PC-9 (cell line): ENCODE measurements at regions of chrX and their contacts with region 1.

Region 1: DNA sequence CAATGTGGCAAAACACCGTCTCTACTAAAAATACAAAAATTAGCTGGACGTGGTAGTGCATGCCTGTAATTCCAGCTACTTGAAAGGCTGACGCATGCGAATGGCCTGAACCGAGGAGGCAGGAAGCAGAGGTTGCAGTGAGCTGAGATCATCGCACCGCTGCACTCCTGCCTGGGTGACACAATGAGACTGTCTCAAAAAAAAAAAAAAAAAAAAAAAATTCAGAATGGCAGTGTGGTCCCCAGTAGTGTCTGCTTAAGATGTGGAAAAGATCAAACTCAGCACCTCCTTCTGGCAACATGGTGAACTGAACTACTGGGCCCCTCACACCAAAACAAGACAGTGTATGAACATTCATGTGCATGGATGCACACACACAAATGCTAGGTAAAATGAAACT is 32.2 kb downstream of the SMS start:
- DNase-seq: peak in 1 of 2 experiments; percentile 69
- H3K4me3 ChIP-seq: no peak overlapping the region
- H3K27ac ChIP-seq: peak overlapping the region; percentile 74
- H3K4me1 ChIP-seq: peaks cover 24% of the 10 kb centered on the region
- H3K27me3 ChIP-seq: no peaks in the 10 kb centered on the region
- CTCF ChIP-seq: no peak

Region 2: DNA sequence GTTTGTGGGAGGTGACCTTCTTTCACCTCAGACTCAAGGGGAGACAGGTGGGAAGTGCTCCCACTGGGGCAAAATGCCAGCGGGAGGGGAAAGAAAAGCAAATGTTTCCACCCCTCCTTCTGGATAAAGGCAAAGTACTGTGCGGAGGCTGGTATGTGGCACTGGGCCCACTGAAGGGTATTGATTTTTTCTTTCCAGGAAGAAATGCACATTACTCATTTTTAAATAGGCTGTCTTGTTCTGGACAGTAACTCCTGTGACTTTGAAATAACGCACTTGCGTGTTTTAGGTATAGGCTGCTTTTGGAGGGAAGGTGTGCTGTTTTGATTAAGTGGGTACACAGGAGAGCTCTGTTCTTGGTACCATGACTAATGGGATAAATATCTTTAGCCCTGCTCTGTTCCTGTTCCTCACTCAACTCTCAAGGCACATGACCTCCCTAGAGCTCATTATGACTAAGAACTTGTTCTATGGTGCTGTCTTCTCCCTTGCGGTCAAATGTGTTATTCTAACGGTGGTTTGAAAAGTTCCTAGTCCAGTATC is 174.0 kb before region 1 on chrX:
- CTCF ChIA-PET with region 1: no interaction called
- POLR2A ChIA-PET with region 1: no interaction called
- intact Hi-C with region 1: loop called (anchors 1 kb)
- DNase-seq: peak; percentile 28 to 63
- H3K4me3 ChIP-seq: no peak overlapping the region
- H3K27ac ChIP-seq: no peak overlapping the region
- H3K4me1 ChIP-seq: no peaks in the 10 kb centered on the region
- H3K27me3 ChIP-seq: no peaks in the 10 kb centered on the region
- CTCF ChIP-seq: no peak

Region 3: GRCh38 chrX:21839334-21840192 is 133.2 kb before region 1 on chrX and contains the start of gene MBTPS2:
- CTCF ChIA-PET with region 1: no interaction called
- POLR2A ChIA-PET with region 1: no interaction called
- intact Hi-C with region 1: loop called (anchors 2 kb)
- DNase-seq: peak; percentile 71 to 79
- H3K4me3 ChIP-seq: peak within 1 kb of the TSS; percentile 89
- H3K27ac ChIP-seq: peak within 1 kb of the TSS; percentile 67
- H3K4me1 ChIP-seq: no peaks in the 10 kb centered on the region; the same call in 1 of the 2 replicates
- H3K27me3 ChIP-seq: no peaks in the 10 kb centered on the region
- CTCF ChIP-seq: peak; percentile 34; the same call in 1 of the 2 replicates
- total RNA-seq, gene MBTPS2: 12.7 and 16.9 TPM in 2 replicates

Region 4: DNA sequence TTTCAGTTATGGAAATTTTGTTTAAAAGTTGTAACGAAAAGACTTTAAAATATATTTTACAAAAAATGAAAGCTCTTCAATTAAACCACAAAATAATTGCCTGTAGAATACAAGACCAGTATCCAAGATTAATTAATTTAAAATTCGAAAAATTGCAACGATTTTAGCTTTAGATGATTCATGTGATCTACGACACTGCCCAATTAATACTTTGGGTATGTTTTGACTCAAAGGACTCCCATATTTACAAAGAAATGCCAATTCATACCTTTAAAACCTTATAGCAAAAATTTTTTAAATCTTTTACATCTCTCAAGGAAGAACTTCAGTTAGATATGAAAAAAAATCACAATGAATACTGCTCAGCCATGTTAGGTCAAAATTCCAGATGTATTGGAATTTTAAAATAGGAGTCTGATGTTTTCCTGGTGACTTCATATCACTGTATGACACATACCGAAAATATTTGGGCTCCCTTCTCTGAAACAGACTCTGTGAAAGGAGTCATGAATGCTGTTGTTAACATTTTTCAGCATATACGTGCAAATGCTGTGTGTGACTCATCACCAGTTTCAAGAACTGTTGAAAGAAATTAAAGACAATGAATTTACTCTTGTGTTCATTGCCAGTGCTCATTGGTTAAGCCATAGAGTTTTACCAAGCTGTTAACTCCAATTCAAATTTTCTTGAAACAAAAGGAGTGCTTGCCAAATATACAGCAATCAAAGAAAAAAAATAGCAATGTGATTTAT is 46.0 kb before region 1 on chrX:
- CTCF ChIA-PET with region 1: interaction called, 3 read pairs
- POLR2A ChIA-PET with region 1: no interaction called
- intact Hi-C with region 1: loop called (anchors 2 kb)
- DNase-seq: peak; percentile 24 to 94
- H3K4me3 ChIP-seq: no peak overlapping the region
- H3K27ac ChIP-seq: peak overlapping the region; percentile 82
- H3K4me1 ChIP-seq: peaks cover 17% of the 10 kb centered on the region
- H3K27me3 ChIP-seq: no peaks in the 10 kb centered on the region
- CTCF ChIP-seq: no peak

Region 5: DNA sequence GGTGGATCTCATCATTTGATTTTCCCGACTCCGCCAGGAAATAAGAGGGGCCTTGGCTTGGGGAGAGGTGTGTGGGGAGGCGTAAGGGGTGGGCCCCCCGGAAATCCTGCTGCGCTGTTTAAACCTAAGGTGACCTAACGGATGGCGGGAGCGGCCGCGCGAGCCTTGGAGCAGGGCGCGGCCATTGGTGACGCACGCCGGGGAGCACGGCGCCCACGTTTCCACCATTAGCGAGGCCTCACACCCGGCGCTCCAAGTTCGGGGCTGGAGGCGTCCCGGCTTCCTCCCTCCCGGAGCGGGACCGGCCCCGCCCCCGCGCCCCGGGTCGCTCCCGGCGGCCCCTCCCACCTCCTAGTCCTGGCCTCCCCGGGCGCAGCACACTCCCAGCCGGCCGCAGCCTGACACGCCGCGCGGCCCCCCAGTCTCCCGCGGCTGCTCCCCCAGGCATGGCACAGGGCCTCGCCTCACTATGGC is 32.3 kb before region 1 on chrX and contains the start of gene SMS:
- CTCF ChIA-PET with region 1: no interaction called
- POLR2A ChIA-PET with region 1: interaction called, 3 read pairs
- intact Hi-C with region 1: loop called (anchors 2 kb)
- DNase-seq: peak; percentile 59 to 79
- H3K4me3 ChIP-seq: peak within 1 kb of the TSS; percentile 78
- H3K27ac ChIP-seq: no peak within 1 kb of the TSS; the same call in 1 of the 2 replicates
- H3K4me1 ChIP-seq: peaks cover 19% of the 10 kb centered on the region
- H3K27me3 ChIP-seq: no peaks in the 10 kb centered on the region
- CTCF ChIP-seq: no peak
- total RNA-seq, gene SMS: 186 and 218 TPM in 2 replicates

Region 6: GRCh38 chrX:21959362-21960105 is 13.2 kb before region 1 on chrX:
- CTCF ChIA-PET with region 1: no interaction called
- POLR2A ChIA-PET with region 1: no interaction called
- intact Hi-C with region 1: no loop called
- DNase-seq: no peak
- H3K4me3 ChIP-seq: no peak overlapping the region
- H3K27ac ChIP-seq: no peak overlapping the region
- H3K4me1 ChIP-seq: no peaks in the 10 kb centered on the region
- H3K27me3 ChIP-seq: no peaks in the 10 kb centered on the region
- CTCF ChIP-seq: no peak